Activated CD8-positive, alpha-beta T cell treated with anti-CD3 and anti-CD28 coated beads for 36 hours (primary cell): ENCODE measurements at regions of chr4 and their contacts with region 1.

Region 1: GRCh38 chr4:81913427-81913879 is 441.7 kb upstream of the RASGEF1B start:
- DNase-seq: peak; percentile 74
- ATAC-seq: peak; percentile 83
- H3K4me3 Mint-ChIP-seq: no peak overlapping the region
- H3K27ac Mint-ChIP-seq: no peak overlapping the region
- H3K4me1 Mint-ChIP-seq: peaks cover 5% of the 10 kb centered on the region
- H3K27me3 Mint-ChIP-seq: peaks cover 15% of the 10 kb centered on the region
- CTCF ChIP-seq: peak; percentile 85

Region 2: DNA sequence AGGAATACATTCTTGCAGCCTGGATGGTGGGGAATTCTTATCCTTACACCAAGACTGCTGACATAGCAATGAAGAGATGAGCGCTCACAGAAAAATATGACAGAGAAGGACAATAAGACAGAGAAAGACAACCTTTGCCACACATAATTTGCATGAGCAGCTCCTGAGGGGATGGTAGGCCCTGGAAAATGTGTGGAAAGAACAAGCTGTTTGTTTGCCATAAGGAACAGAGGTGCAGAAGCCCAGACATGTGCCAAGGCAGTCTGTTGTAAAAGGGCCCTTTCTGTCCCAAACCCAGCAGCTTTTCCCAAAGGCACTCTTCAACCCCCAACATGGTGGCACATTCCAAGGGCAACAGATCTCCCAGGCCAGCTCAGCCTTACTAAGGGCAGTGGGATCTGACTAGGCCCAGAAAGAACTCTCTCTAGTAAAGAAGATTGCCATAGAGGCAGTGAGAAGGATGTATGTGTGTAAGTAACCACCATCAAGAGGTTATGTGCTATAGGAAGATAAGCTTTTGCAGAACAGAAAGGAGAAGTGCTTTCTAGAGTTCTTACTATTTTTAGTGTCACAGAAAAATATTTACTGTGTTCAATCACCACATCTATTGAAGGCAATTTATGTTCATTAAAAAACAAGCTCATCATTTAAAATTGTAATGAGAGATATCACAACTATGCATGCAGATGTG is 154.7 kb before region 1 on chr4:
- CTCF ChIA-PET with region 1: no interaction called
- POLR2A ChIA-PET with region 1: no interaction called
- intact Hi-C with region 1: no loop called
- DNase-seq: no peak
- ATAC-seq: no peak
- H3K4me3 Mint-ChIP-seq: no peak overlapping the region
- H3K27ac Mint-ChIP-seq: no peak overlapping the region
- H3K4me1 Mint-ChIP-seq: peaks cover 20% of the 10 kb centered on the region
- H3K27me3 Mint-ChIP-seq: no peaks in the 10 kb centered on the region
- CTCF ChIP-seq: no peak

Region 3: DNA sequence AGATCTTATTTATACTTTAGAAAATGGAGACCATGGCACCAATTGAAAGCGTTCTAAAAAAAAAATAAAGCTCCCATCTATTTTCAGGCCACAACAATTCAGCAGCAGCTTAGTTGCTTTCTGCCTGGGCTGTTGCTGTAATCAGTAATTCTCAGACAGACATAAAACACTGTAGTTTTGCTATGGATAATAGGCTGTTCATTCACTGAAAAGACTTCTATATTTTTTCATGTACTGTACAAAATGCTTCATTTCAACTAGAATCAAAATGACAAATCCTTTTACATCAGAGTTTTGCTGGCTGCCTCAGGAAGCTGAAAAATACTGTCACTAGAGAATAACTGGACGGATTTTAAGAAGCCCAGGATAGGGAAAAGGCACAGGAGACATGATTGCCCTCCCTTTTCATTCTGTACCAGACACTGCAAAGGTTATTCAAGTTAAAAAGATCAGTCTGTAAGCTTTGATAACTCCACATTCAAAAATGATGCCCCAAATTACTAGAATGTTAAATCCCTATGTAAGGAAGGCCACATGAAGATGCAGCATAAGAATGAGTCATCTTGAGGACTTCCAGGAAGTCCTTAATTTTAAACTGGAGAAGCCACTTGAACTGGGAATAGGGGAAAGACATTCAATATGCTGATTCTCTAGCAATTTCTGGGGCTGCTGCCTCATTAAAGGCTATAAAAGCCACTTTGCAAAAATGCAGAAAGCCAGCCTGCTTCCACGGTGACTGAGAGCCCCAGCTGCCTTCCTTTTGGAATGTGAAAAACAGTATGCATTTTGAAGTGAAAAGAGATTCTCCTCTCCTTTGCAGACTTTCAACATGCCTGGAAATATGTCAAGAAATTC is 38.6 kb before region 1 on chr4:
- CTCF ChIA-PET with region 1: interaction called, 10 read pairs
- POLR2A ChIA-PET with region 1: no interaction called
- intact Hi-C with region 1: no loop called
- DNase-seq: no peak
- ATAC-seq: no peak
- H3K4me3 Mint-ChIP-seq: no peak overlapping the region
- H3K27ac Mint-ChIP-seq: no peak overlapping the region
- H3K4me1 Mint-ChIP-seq: no peaks in the 10 kb centered on the region
- H3K27me3 Mint-ChIP-seq: peaks cover 1% of the 10 kb centered on the region
- CTCF ChIP-seq: no peak

Region 4: GRCh38 chr4:81896936-81897335 is 16.5 kb before region 1 on chr4:
- CTCF ChIA-PET with region 1: interaction called, 19 read pairs
- POLR2A ChIA-PET with region 1: no interaction called
- intact Hi-C with region 1: no loop called
- DNase-seq: no peak
- ATAC-seq: no peak
- H3K4me3 Mint-ChIP-seq: no peak overlapping the region
- H3K27ac Mint-ChIP-seq: no peak overlapping the region
- H3K4me1 Mint-ChIP-seq: no peaks in the 10 kb centered on the region
- H3K27me3 Mint-ChIP-seq: peaks cover 4% of the 10 kb centered on the region
- CTCF ChIP-seq: no peak

Region 5: DNA sequence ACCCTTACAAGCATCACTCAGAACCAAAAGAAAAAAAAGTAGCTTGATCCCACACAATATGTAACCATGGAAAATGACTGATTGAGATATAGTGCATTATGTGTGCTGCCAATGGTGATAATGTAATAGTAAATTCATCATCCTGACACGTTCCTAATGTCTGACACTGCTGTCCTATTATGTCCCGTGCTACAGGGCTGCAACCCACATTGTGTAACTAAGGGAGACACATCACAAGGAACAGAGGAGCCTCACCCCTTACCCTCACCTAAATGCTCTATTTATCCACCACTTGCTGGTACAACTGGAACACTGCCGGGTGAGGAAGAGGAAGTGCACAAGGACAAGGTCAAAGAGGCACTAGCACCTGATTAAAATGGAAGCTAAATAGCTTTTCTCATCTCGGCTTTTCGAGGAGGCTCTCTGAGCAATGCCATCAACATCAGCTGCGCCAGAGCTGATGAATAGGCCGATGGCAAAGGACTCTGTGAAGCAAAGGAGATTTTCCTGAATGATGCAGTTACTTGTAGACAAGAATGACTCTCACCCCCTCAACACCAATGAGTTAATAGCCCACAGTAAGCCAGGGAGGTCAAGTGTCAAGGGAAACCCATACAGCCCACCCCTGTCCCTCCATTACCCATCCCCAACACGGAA is 278.7 kb after region 1 on chr4:
- CTCF ChIA-PET with region 1: no interaction called
- POLR2A ChIA-PET with region 1: no interaction called
- intact Hi-C with region 1: loop called (anchors 10 kb)
- DNase-seq: no peak
- ATAC-seq: no peak
- H3K4me3 Mint-ChIP-seq: no peak overlapping the region
- H3K27ac Mint-ChIP-seq: no peak overlapping the region
- H3K4me1 Mint-ChIP-seq: no peaks in the 10 kb centered on the region
- H3K27me3 Mint-ChIP-seq: no peaks in the 10 kb centered on the region
- CTCF ChIP-seq: no peak

Region 6: DNA sequence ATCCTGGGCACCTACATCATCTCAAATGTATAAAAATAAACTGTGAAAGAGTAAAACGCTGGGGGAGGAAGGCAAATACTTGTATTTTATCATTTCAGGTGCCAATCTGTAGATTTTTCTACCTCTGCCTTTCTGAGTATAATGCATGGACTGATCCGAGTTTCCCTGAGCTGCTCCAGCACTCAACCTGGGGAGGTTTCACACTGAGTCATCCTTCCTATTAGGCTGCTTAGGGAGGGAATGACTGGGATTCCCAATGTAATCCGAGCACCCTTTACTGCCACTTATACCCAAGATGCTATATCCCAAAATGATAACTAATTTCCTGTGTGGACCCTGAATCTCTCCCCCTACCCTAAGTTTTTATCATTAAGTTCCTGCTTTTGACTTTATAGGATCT is 333.7 kb after region 1 on chr4:
- CTCF ChIA-PET with region 1: no interaction called
- POLR2A ChIA-PET with region 1: no interaction called
- intact Hi-C with region 1: no loop called
- DNase-seq: no peak
- ATAC-seq: no peak
- H3K4me3 Mint-ChIP-seq: no peak overlapping the region
- H3K27ac Mint-ChIP-seq: no peak overlapping the region
- H3K4me1 Mint-ChIP-seq: peaks cover 5% of the 10 kb centered on the region
- H3K27me3 Mint-ChIP-seq: no peaks in the 10 kb centered on the region
- CTCF ChIP-seq: no peak